Activated naive CD4-positive, alpha-beta T cell treated with anti-CD3 and anti-CD28 coated beads for 36 hours (primary cell): ENCODE measurements at regions of chr13 and their contacts with region 1.

Region 1: DNA sequence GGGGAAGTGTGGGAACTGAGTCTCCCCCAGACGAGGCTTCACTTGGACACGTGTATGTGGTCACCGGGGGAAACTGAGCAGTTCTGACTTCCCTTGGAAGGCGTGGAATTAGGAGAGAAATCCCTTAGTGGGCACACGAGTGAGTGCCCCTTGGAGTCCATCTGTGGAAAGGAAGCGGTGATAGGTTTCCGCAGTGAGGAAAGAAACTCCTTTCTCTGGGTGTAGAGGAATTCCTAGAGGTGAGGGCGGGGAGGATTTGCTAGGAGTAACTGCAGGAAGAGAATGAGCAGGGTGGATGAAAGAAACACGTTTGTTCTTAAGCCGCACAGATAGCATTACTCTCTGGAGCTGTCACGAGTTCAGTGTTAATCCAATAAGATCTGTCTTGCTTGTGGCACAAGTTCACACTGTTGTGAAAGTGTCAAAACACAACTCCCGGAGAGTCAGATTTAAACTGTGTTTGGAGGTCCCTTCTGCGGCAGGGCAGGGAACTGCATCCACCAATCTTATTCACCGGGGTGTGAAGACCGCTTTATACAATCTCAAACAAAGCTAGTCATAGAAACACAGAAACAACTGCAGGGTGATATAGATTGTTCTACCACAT is 1.2 kb downstream of the KL start:
- DNase-seq: peak; percentile 79
- H3K4me3 Mint-ChIP-seq: peak overlapping the region; percentile 64
- H3K27ac Mint-ChIP-seq: peak overlapping the region; percentile 7
- H3K4me1 Mint-ChIP-seq: peaks cover 9% of the 10 kb centered on the region
- H3K27me3 Mint-ChIP-seq: peaks cover 59% of the 10 kb centered on the region

Region 2: GRCh38 chr13:31909864-31910551 is 1107.4 kb before region 1 on chr13:
- CTCF ChIA-PET with region 1: no interaction called
- intact Hi-C with region 1: loop called (anchors 5 kb)
- DNase-seq: peak; percentile 63
- H3K4me3 Mint-ChIP-seq: no peak overlapping the region
- H3K27ac Mint-ChIP-seq: no peak overlapping the region
- H3K4me1 Mint-ChIP-seq: no peaks in the 10 kb centered on the region
- H3K27me3 Mint-ChIP-seq: peaks cover 3% of the 10 kb centered on the region

Region 3: DNA sequence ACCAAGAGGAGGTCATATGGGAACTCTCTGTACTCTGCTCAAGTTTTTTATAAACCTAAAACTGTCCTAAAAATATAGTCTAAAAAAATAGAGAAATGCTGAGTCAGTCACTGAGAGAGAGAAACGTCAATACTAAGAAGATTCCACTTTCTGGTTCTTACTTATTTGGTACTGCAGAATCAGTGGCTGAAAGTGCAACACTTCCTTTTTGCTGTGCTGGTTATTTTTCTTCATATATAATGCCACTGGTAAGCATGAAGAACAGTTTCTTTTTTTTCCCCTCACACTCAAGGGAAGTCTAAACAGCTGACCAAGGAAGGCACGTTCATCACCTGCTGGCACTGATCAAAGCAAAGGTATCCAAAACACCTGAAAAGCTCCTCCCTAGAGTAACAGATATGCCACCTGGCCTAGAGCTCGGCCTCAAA is 545.2 kb before region 1 on chr13:
- CTCF ChIA-PET with region 1: no interaction called
- intact Hi-C with region 1: loop called (anchors 5 kb)
- DNase-seq: no peak
- H3K4me3 Mint-ChIP-seq: no peak overlapping the region
- H3K27ac Mint-ChIP-seq: no peak overlapping the region
- H3K4me1 Mint-ChIP-seq: peaks cover 3% of the 10 kb centered on the region
- H3K27me3 Mint-ChIP-seq: no peaks in the 10 kb centered on the region

Region 4: DNA sequence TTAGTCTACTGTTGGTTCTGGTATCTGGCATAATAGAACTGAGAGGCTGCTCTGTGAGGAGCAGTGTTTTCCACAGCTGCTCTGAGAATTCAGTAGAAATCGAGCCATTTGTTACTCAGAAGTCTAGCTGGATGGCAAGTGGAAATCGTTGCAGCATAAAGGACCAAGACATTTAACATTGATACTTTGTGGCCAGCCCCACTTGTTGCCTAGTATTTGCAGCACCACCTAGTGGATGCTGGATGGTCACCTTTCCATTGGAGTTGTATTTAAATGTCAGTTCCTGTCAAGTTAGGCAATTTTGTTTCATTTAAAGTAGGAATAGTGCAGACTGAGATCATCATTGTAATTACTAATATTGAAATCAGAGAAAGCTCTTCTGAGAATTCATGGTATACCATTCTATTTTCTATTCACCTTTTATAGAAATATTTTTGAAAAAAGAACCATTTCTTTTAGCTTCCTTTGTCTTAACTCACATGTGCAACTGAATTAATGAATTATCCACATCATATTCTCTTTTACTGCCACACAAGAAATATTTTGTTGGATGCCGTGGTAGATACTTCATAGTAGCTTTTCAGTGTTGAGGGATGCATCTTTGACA is 366.6 kb before region 1 on chr13:
- CTCF ChIA-PET with region 1: interaction called, 3 read pairs
- intact Hi-C with region 1: loop called (anchors 2 kb)
- DNase-seq: peak; percentile 79
- H3K4me3 Mint-ChIP-seq: no peak overlapping the region
- H3K27ac Mint-ChIP-seq: peak overlapping the region; percentile 12
- H3K4me1 Mint-ChIP-seq: peaks cover 39% of the 10 kb centered on the region
- H3K27me3 Mint-ChIP-seq: no peaks in the 10 kb centered on the region

Region 5: DNA sequence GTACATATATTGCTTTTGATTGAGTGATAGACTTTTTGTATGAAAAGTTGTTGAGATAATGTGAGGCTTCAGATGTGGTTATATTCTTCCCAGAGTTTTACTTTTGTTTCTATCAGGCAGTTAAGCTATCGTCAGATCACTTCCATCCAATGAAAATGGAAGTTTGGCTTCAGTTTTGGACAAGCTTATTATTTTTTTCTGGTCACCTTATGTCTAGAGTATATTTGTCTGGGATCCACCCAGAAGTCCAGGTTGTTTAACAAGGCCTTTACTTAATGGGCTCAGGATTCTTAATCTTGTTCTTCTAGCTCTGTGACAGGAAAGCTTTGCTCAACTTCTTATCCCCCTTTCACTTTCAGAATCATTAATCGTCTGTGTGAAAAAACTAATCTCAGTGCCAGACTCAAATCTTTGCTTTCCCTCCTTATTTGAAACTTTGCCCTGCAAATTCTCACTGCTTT is 280.3 kb before region 1 on chr13:
- CTCF ChIA-PET with region 1: no interaction called
- intact Hi-C with region 1: loop called (anchors 2 kb)
- DNase-seq: no peak
- H3K4me3 Mint-ChIP-seq: peak overlapping the region; percentile 71
- H3K27ac Mint-ChIP-seq: peak overlapping the region; percentile 81
- H3K4me1 Mint-ChIP-seq: peaks cover 42% of the 10 kb centered on the region
- H3K27me3 Mint-ChIP-seq: no peaks in the 10 kb centered on the region

Region 6: DNA sequence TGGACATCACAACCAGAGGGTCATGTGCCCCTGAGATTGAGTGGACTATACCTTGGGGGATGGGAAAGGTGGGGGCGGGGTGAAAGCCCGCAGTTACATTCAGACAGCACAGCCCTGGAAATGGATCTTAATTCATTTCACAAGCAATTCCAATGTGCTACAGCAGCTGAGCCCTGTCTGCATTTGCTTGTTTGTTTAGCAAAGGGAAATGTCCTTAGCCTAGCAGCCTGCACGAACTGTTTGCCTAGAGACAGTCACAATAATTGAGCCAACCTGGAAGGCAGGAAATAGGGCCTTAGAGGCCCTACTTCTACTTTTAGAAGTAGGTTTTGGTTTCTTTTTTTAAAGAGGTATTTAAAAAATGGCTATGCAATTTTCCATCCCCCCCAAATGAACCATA is 178.5 kb before region 1 on chr13:
- CTCF ChIA-PET with region 1: no interaction called
- intact Hi-C with region 1: loop called (anchors 5 kb)
- DNase-seq: peak; percentile 29
- H3K4me3 Mint-ChIP-seq: no peak overlapping the region
- H3K27ac Mint-ChIP-seq: no peak overlapping the region
- H3K4me1 Mint-ChIP-seq: peaks cover 17% of the 10 kb centered on the region
- H3K27me3 Mint-ChIP-seq: no peaks in the 10 kb centered on the region

Region 7: GRCh38 chr13:32917504-32917903 is 99.9 kb before region 1 on chr13:
- CTCF ChIA-PET with region 1: no interaction called
- intact Hi-C with region 1: loop called (anchors 1 kb)
- DNase-seq: peak; percentile 16
- H3K4me3 Mint-ChIP-seq: no peak overlapping the region
- H3K27ac Mint-ChIP-seq: no peak overlapping the region
- H3K4me1 Mint-ChIP-seq: peaks cover 10% of the 10 kb centered on the region
- H3K27me3 Mint-ChIP-seq: peaks cover 3% of the 10 kb centered on the region

Region 8: DNA sequence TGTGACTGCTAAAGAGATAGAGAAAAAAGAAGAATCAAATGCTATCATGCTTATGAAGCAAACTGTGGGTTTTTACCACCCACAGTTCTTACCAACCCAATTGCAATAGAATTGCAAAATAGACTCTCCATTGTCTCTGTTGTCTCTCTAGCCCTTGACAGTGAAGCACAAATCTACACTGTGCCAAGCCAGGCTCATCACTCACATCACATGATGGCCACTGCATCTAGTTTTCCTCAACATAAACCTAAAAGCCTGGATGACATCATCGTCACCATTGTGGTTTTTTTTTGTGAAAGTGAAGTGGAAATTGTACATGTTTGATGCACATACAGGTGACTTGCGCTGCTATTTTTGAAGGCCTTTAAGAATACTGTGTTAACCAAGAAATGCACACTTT is 54.9 kb after region 1 on chr13:
- CTCF ChIA-PET with region 1: no interaction called
- intact Hi-C with region 1: no loop called
- DNase-seq: peak; percentile 10
- H3K4me3 Mint-ChIP-seq: no peak overlapping the region
- H3K27ac Mint-ChIP-seq: no peak overlapping the region
- H3K4me1 Mint-ChIP-seq: no peaks in the 10 kb centered on the region
- H3K27me3 Mint-ChIP-seq: no peaks in the 10 kb centered on the region